Activated CD4-positive, alpha-beta memory T cell treated with anti-CD3 and anti-CD28 coated beads, Interleukin-2, amount 10 ng/mL, durations not matched to agents 7 days and 5 days (primary cell): ENCODE measurements at regions of chr12 and their contacts with region 1.

Region 1: GRCh38 chr12:2812290-2813213 is at the start of gene ITFG2:
- DNase-seq: peak; percentile 98
- H3K4me3 Mint-ChIP-seq: peak within 1 kb of the TSS; percentile 99
- H3K27ac Mint-ChIP-seq: peak within 1 kb of the TSS; percentile 97
- H3K4me1 Mint-ChIP-seq: peaks cover 27% of the 10 kb centered on the region
- H3K27me3 Mint-ChIP-seq: no peaks in the 10 kb centered on the region
- total RNA-seq, gene ITFG2: 25.9 to 29.5 TPM

Region 2: GRCh38 chr12:2691006-2691344 is 121.6 kb before region 1 on chr12:
- CTCF ChIA-PET with region 1: interaction called, 14 read pairs
- POLR2A ChIA-PET with region 1: interaction called, 16 read pairs
- DNase-seq: peak; percentile 65
- H3K4me3 Mint-ChIP-seq: peak overlapping the region; percentile 82
- H3K27ac Mint-ChIP-seq: peak overlapping the region; percentile 85
- H3K4me1 Mint-ChIP-seq: peaks cover 29% of the 10 kb centered on the region
- H3K27me3 Mint-ChIP-seq: peaks cover 19% of the 10 kb centered on the region

Region 3: DNA sequence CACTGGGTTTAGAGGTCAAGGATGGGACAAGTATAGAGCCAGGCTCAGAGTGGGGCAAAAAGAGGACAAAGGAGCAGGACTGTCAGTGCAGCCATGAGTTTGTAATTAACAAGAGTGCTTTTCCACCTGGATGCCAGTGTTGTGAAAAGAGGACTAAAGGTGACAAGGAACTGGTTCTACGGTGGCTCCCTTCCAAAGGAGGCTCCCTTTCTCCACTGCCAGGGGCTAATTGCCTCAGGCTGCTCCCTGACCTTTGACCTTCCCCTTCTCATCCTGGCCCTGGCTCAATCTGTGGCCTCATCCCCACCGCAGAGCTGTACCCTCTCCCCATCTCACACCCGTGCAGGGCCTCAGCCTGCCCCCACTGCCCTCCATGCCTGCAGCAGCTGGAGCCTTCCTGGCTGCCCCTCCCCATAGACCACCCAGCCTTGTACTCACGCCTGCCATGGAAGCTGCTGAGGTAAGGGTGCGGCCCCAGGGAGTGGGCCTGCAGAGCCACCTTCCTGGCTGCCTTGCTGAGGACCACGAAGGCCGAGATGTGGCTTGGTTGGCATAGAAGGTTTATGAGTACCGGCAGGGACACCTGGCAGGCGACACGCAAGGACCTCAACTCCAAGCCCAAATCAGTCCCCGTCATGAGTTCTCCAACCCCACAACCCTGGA is 42.5 kb before region 1 on chr12:
- CTCF ChIA-PET with region 1: no interaction called
- POLR2A ChIA-PET with region 1: no interaction called
- DNase-seq: no peak
- H3K4me3 Mint-ChIP-seq: no peak overlapping the region
- H3K27ac Mint-ChIP-seq: no peak overlapping the region
- H3K4me1 Mint-ChIP-seq: no peaks in the 10 kb centered on the region
- H3K27me3 Mint-ChIP-seq: no peaks in the 10 kb centered on the region

Region 4: GRCh38 chr12:2845280-2845679 is 32.7 kb after region 1 on chr12:
- CTCF ChIA-PET with region 1: no interaction called
- POLR2A ChIA-PET with region 1: no interaction called
- DNase-seq: no peak
- H3K4me3 Mint-ChIP-seq: no peak overlapping the region
- H3K27ac Mint-ChIP-seq: no peak overlapping the region
- H3K4me1 Mint-ChIP-seq: no peaks in the 10 kb centered on the region
- H3K27me3 Mint-ChIP-seq: no peaks in the 10 kb centered on the region